Activated CD4-positive, alpha-beta T cell treated with anti-CD3 and anti-CD28 coated beads for 36 hours (primary cell): ENCODE measurements at regions of chr4 and their contacts with region 1.

Region 1: GRCh38 chr4:7042697-7043464 is at the start of gene TADA2B:
- DNase-seq: peak; percentile 95
- ATAC-seq: peak; percentile 87
- H3K4me3 Mint-ChIP-seq: peak within 1 kb of the TSS; percentile 86
- H3K27ac Mint-ChIP-seq: peak within 1 kb of the TSS; percentile 77
- H3K4me1 Mint-ChIP-seq: peaks cover 46% of the 10 kb centered on the region
- H3K27me3 Mint-ChIP-seq: peaks cover 3% of the 10 kb centered on the region
- total RNA-seq, gene TADA2B: 9.0 to 10.6 TPM

Region 2: GRCh38 chr4:6640292-6641163 is 402.4 kb before region 1 on chr4 and contains the start of gene MRFAP1:
- CTCF ChIA-PET with region 1: no interaction called
- POLR2A ChIA-PET with region 1: no interaction called
- intact Hi-C with region 1: loop called in 1 of 2 experiments (anchors 1 kb)
- DNase-seq: peak; percentile 97
- ATAC-seq: peak; percentile 86
- H3K4me3 Mint-ChIP-seq: peak within 1 kb of the TSS; percentile 96
- H3K27ac Mint-ChIP-seq: peak within 1 kb of the TSS; percentile 100
- H3K4me1 Mint-ChIP-seq: peaks cover 27% of the 10 kb centered on the region
- H3K27me3 Mint-ChIP-seq: no peaks in the 10 kb centered on the region
- total RNA-seq, gene MRFAP1: 66.8 to 122 TPM

Region 3: DNA sequence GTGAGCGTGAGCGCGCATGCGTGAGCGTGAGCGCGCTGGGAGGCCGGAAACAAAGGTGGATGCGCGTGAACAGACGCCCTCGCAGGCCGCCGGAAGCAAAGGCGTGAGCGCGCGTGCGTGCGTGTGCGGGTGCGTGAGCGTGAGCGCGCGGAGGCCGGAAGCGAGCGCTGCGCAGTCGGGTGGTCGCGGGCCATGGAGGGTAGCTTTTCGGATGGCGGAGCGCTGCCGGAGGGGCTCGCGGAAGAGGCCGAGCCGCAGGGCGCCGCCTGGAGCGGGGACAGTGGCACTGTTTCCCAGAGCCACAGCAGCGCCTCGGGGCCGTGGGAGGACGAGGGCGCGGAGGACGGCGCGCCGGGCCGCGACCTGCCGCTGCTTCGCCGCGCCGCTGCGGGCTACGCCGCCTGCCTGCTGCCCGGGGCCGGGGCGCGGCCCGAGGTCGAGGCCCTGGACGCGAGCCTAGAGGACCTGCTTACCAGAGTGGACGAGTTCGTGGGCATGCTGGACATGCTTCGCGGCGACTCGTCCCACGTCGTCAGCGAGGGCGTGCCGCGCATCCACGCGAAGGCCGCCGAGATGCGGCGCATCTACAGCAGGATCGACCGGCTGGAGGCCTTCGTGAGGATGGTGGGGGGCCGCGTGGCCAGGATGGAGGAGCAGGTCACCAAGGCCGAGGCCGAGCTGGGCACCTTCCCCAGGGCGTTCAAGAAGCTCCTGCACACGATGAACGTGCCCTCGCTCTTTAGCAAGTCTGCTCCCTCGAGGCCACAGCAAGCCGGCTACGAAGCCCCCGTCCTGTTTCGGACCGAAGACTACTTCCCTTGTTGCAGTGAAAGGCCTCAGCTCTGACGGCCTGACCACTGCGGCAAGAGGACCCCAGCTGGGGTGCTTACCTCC is 326.6 kb before region 1 on chr4 and contains the start of gene BLOC1S4:
- CTCF ChIA-PET with region 1: interaction called, 3 read pairs
- POLR2A ChIA-PET with region 1: no interaction called
- intact Hi-C with region 1: loop called in 1 of 2 experiments (anchors 1 kb)
- DNase-seq: peak; percentile 93
- ATAC-seq: peak; percentile 80
- H3K4me3 Mint-ChIP-seq: peak within 1 kb of the TSS; percentile 92
- H3K27ac Mint-ChIP-seq: peak within 1 kb of the TSS; percentile 92
- H3K4me1 Mint-ChIP-seq: peaks cover 27% of the 10 kb centered on the region
- H3K27me3 Mint-ChIP-seq: no peaks in the 10 kb centered on the region
- total RNA-seq, gene BLOC1S4: 10.1 to 16.7 TPM

Region 4: GRCh38 chr4:6917461-6918271 is 125.2 kb before region 1 on chr4:
- CTCF ChIA-PET with region 1: no interaction called
- POLR2A ChIA-PET with region 1: no interaction called
- intact Hi-C with region 1: loop called in 1 of 2 experiments (anchors 10 kb)
- DNase-seq: peak; percentile 76
- ATAC-seq: peak; percentile 50
- H3K4me3 Mint-ChIP-seq: peak overlapping the region; percentile 53
- H3K27ac Mint-ChIP-seq: peak overlapping the region; percentile 95
- H3K4me1 Mint-ChIP-seq: peaks cover 67% of the 10 kb centered on the region
- H3K27me3 Mint-ChIP-seq: no peaks in the 10 kb centered on the region

Region 5: DNA sequence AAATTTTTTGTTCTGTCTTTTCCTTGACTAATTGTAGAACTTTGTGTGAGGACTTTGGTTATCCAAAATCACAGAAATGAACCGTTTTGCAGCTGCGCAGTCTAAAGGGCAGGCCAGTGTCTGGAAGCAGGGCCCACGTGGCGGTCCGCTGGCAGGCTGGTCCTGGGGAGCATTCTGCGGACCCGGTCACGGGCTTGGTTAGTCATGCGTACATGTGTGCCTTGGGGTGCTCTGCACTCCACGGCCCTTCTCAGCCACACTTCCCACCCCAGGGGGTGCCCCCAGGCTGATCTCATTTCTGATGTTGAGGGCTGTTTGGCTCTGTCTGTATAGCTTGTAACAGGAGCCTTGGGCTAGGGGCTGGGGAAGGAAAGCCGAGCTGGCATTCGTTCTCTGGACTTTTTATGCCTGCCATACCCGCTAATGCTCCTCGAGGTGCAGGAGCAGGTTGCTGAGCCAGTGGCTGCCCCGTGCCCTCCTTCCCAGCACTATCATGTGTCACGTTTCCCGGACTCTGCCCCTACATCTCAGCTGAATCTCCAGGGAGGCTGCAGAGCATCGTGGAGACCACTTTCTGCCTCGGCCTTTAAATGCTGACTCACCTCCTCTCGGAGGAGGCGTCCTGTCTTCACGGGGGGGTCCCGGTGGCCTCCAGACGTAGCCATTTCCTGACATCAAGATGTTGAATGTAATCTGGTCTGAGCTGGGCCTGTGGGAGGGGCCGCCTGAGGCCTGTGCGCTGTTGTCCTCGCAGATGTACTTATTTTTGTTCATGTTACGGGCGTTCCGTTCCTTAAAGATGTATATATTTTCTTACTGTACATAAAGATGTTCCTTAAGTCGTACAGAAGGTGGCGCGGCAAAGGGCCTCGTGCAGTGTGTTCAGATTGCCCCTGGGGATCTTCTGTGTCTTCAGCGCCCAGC is 11.1 kb before region 1 on chr4:
- CTCF ChIA-PET with region 1: interaction called, 10 read pairs
- POLR2A ChIA-PET with region 1: no interaction called
- intact Hi-C with region 1: no loop called
- DNase-seq: no peak
- ATAC-seq: no peak
- H3K4me3 Mint-ChIP-seq: no peak overlapping the region
- H3K27ac Mint-ChIP-seq: no peak overlapping the region
- H3K4me1 Mint-ChIP-seq: no peaks in the 10 kb centered on the region
- H3K27me3 Mint-ChIP-seq: no peaks in the 10 kb centered on the region

Region 6: DNA sequence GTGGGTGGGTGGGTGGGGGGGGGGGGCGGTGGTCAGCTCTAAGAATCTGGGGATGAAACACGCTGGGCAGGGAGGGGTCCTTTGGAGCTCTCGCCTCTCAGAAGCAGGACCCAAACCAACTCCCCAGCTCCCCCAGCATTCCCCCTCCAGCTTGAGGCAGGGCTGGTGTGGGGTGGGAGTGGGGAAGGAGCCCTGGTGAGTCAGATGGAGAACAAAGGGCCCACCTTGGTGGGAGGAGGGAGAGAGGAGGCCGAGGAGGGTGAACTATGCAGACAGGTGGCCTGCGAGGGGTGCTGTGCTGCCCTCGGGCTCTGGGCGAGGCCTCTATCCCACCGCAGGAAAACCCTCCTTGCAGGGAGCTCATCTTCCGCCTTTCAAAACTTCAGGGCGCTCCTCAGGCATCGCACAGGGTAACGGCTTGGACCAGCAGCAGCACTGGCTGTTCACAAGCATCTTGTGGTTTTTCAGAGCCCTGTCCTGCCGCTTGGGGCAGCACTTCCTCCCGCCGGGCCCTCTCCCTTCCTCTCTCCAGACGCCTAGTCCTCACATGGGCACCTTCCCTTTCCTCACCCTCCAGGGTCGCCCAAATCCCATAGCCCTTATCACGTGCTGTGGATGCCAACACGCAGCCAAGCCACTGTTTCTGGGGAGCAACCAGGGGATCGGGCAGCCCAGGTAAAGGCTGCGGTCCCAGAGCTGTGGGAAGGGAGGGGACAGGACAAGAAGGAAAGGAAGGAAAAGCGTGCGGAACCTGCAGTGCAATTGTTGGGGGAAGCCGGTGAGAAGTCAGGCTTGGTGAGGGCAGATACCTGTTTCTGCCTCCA is 59.0 kb after region 1 on chr4:
- CTCF ChIA-PET with region 1: interaction called, 5 read pairs
- POLR2A ChIA-PET with region 1: interaction called, 3 read pairs
- intact Hi-C with region 1: loop called (anchors 1 to 2 kb)
- DNase-seq: peak; percentile 78
- ATAC-seq: peak; percentile 74
- H3K4me3 Mint-ChIP-seq: peak overlapping the region; percentile 84
- H3K27ac Mint-ChIP-seq: no peak overlapping the region
- H3K4me1 Mint-ChIP-seq: peaks cover 8% of the 10 kb centered on the region
- H3K27me3 Mint-ChIP-seq: no peaks in the 10 kb centered on the region

Region 7: GRCh38 chr4:7156761-7157488 is 114.0 kb after region 1 on chr4:
- CTCF ChIA-PET with region 1: no interaction called
- POLR2A ChIA-PET with region 1: no interaction called
- intact Hi-C with region 1: no loop called
- DNase-seq: no peak
- ATAC-seq: no peak
- H3K4me3 Mint-ChIP-seq: no peak overlapping the region
- H3K27ac Mint-ChIP-seq: no peak overlapping the region
- H3K4me1 Mint-ChIP-seq: no peaks in the 10 kb centered on the region
- H3K27me3 Mint-ChIP-seq: peaks cover 12% of the 10 kb centered on the region